Tibial artery (tissue), 4 donors: ENCODE measurements at regions of chr9 and their contacts with region 1.

Region 1: GRCh38 chr9:21761309-21761901 is 41.0 kb upstream of the MTAP start:
- DNase-seq: no peak
- H3K4me3 ChIP-seq: no peak overlapping the region
- H3K27ac ChIP-seq: no peak overlapping the region
- H3K4me1 ChIP-seq: no peaks in the 10 kb centered on the region
- H3K27me3 ChIP-seq: peaks cover 0 to under 1% of the 10 kb centered on the region in 2 donors
- CTCF ChIP-seq: no peak

Region 2: DNA sequence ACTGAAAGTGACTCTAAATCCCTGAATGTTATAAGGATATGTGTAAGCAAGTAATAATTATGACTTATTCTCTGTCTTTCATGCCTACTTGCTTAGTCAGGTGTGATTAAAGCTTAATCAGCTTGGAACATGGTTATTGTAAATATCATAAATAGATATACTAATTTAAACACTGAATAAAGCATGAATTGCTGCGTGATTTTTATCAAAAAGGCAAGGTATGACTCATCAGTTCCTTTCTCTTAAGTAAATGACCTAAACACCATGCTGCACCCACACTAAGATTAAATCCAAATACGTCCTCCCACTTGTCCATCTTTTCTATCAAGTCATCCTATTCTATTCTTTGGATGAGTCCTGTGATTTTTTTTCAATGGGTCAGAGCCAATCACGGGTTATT is 83.6 kb before region 1 on chr9:
- intact Hi-C with region 1: no loop called
- DNase-seq: no peak
- H3K4me3 ChIP-seq: no peak overlapping the region
- H3K27ac ChIP-seq: no peak overlapping the region
- H3K4me1 ChIP-seq: no peaks in the 10 kb centered on the region
- H3K27me3 ChIP-seq: no peaks in the 10 kb centered on the region
- CTCF ChIP-seq: no peak

Region 3: GRCh38 chr9:22105005-22105722 is 343.8 kb after region 1 on chr9:
- intact Hi-C with region 1: no loop called
- DNase-seq: no peak
- H3K4me3 ChIP-seq: no peak overlapping the region
- H3K27ac ChIP-seq: peak overlapping the region in 1 of 2 donors; percentile 62
- H3K4me1 ChIP-seq: peaks cover 0 to 20% (median 8%) of the 10 kb centered on the region in 4 donors
- H3K27me3 ChIP-seq: no peaks in the 10 kb centered on the region
- CTCF ChIP-seq: no peak

Region 4: DNA sequence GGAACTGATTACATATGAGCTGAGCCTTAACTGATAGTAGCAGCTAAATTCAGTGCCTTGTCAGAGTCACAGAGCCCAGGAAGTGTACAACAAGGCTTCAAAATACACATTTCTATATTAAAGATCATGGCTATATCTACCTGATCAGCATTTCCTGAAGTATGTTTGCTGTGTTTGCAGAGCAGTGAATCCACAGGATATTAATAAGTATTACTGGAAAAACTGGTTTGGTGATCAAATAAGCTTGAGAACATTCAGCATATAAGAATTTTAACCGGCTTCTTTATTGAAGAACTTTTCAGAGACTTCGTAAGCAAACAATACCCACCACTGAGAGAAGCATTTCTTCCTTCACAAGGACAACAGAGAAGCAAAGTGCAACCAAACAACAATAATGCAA is 1837.6 kb after region 1 on chr9:
- intact Hi-C with region 1: loop called (anchors 5 kb)
- DNase-seq: no peak
- H3K4me3 ChIP-seq: no peak overlapping the region
- H3K27ac ChIP-seq: no peak overlapping the region
- H3K4me1 ChIP-seq: no peaks in the 10 kb centered on the region
- H3K27me3 ChIP-seq: no peaks in the 10 kb centered on the region
- CTCF ChIP-seq: no peak